CD4-positive, alpha-beta T cell (primary cell): ENCODE measurements at regions of chr3 and their contacts with region 1.

Region 1: DNA sequence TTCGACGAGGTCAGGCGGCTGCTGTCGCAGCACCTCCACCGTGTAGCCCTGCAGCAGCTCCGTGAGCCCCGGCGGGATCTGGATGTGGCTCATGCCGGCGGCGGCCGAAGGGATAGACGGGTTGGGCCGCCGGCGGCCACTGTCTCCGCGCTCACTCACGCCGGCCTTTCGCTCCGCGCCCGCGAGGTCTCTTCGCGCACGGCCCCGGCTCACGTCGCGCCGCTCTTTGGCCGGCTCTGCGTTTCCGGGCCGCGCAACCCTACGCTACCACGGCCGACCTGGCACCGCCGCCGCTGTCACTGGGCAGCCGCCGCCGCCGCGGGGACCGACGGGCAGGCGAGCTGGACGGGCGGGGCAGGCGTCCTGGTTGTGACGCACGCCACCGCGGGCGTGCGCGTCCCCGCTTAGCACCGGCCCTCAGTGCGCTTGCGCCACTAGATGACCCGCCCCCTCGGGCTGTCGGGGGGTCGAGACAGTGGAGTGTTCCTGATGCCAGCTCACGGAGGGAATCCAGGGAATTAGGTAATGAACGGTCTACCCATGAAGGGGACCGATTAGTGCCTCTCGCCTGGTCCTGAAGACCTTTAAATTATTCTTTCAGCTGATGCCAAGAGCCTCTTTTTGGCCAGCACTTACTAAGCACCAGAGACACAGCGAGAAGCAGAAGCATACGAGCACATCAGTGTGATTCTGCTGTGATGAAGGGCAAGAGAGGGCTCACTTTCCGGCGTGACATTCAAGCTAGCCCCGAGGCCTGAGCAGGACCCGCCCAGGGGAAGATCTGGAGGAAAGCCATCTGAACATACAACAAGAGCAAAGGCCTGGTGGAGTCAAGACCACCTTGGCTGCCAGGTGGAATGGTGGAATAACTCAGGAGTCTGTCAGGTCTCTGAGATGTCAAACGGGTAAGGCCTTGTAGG is at the start of gene PRKAR2A:
- DNase-seq: peak; percentile 56 to 92 (median 77)
- ATAC-seq: peak; percentile 61
- H3K4me3 ChIP-seq: peak within 1 kb of the TSS; percentile 75
- H3K4me3 Mint-ChIP-seq: peak within 1 kb of the TSS; percentile 96
- H3K27ac ChIP-seq: peak within 1 kb of the TSS; percentile 57 to 66
- H3K27ac Mint-ChIP-seq: peak within 1 kb of the TSS; percentile 97
- H3K4me1 ChIP-seq: peaks cover 31% of the 10 kb centered on the region
- H3K4me1 Mint-ChIP-seq: peaks cover 34% of the 10 kb centered on the region
- H3K27me3 ChIP-seq: no peaks in the 10 kb centered on the region
- H3K27me3 Mint-ChIP-seq: no peaks in the 10 kb centered on the region
- CTCF ChIP-seq: no peak
- total RNA-seq, gene PRKAR2A: 47.4 to 48.3 TPM

Region 2: GRCh38 chr3:47096959-47097358 is 1750.8 kb before region 1 on chr3:
- CTCF ChIA-PET with region 1: no interaction called
- POLR2A ChIA-PET with region 1: no interaction called
- intact Hi-C with region 1: no loop called
- DNase-seq: no peak
- ATAC-seq: no peak
- H3K4me3 ChIP-seq: no peak overlapping the region
- H3K4me3 Mint-ChIP-seq: no peak overlapping the region
- H3K27ac ChIP-seq: no peak overlapping the region
- H3K27ac Mint-ChIP-seq: no peak overlapping the region
- H3K4me1 ChIP-seq: no peaks in the 10 kb centered on the region
- H3K4me1 Mint-ChIP-seq: no peaks in the 10 kb centered on the region
- H3K27me3 ChIP-seq: no peaks in the 10 kb centered on the region
- H3K27me3 Mint-ChIP-seq: no peaks in the 10 kb centered on the region
- CTCF ChIP-seq: no peak

Region 3: GRCh38 chr3:48765376-48765775 is 82.4 kb before region 1 on chr3:
- CTCF ChIA-PET with region 1: no interaction called
- POLR2A ChIA-PET with region 1: no interaction called
- intact Hi-C with region 1: loop called in 1 of 2 experiments (anchors 2 kb)
- DNase-seq: peak in 3 of 14 experiments; percentile 4 to 38 (median 19)
- ATAC-seq: peak; percentile 49
- H3K4me3 ChIP-seq: no peak overlapping the region
- H3K4me3 Mint-ChIP-seq: no peak overlapping the region
- H3K27ac ChIP-seq: no peak overlapping the region
- H3K27ac Mint-ChIP-seq: no peak overlapping the region
- H3K4me1 ChIP-seq: no peaks in the 10 kb centered on the region
- H3K4me1 Mint-ChIP-seq: no peaks in the 10 kb centered on the region
- H3K27me3 ChIP-seq: no peaks in the 10 kb centered on the region
- H3K27me3 Mint-ChIP-seq: no peaks in the 10 kb centered on the region
- CTCF ChIP-seq: no peak

Region 4: GRCh38 chr3:48789665-48790064 is 58.1 kb before region 1 on chr3:
- CTCF ChIA-PET with region 1: no interaction called
- POLR2A ChIA-PET with region 1: no interaction called
- intact Hi-C with region 1: loop called (anchors 5 to 10 kb)
- DNase-seq: no peak
- ATAC-seq: no peak
- H3K4me3 ChIP-seq: no peak overlapping the region
- H3K4me3 Mint-ChIP-seq: no peak overlapping the region
- H3K27ac ChIP-seq: no peak overlapping the region
- H3K27ac Mint-ChIP-seq: peak overlapping the region; percentile 61
- H3K4me1 ChIP-seq: peaks cover 13% of the 10 kb centered on the region
- H3K4me1 Mint-ChIP-seq: peaks cover 21% of the 10 kb centered on the region
- H3K27me3 ChIP-seq: no peaks in the 10 kb centered on the region
- H3K27me3 Mint-ChIP-seq: no peaks in the 10 kb centered on the region
- CTCF ChIP-seq: no peak

Region 5: DNA sequence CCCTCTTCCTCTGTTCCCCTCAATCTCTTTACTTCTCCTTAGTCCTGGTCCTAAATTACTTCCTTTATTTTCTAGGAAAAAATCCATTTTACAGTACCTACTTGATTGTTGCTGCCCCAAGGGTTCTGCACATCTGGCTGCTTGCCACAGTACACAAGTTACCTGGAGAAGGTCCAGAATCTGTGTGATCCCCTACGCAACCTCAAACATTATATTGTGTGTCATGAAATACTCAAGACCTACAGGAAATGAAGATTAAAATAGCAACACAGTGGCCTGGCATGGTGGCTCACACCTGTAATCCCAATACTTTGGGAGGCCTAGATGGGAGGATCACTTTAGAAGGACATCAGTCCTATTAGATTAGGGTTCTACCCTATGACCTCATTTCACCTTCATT is 48.8 kb before region 1 on chr3:
- CTCF ChIA-PET with region 1: no interaction called
- POLR2A ChIA-PET with region 1: no interaction called
- intact Hi-C with region 1: loop called (anchors 5 to 10 kb)
- DNase-seq: no peak
- ATAC-seq: no peak
- H3K4me3 ChIP-seq: no peak overlapping the region
- H3K4me3 Mint-ChIP-seq: no peak overlapping the region
- H3K27ac ChIP-seq: no peak overlapping the region
- H3K27ac Mint-ChIP-seq: no peak overlapping the region
- H3K4me1 ChIP-seq: no peaks in the 10 kb centered on the region
- H3K4me1 Mint-ChIP-seq: no peaks in the 10 kb centered on the region
- H3K27me3 ChIP-seq: no peaks in the 10 kb centered on the region
- H3K27me3 Mint-ChIP-seq: no peaks in the 10 kb centered on the region
- CTCF ChIP-seq: no peak

Region 6: GRCh38 chr3:48811524-48811923 is 36.2 kb before region 1 on chr3:
- CTCF ChIA-PET with region 1: no interaction called
- POLR2A ChIA-PET with region 1: interaction called, 25 read pairs
- intact Hi-C with region 1: loop called (anchors 5 kb)
- DNase-seq: no peak
- ATAC-seq: no peak
- H3K4me3 ChIP-seq: no peak overlapping the region
- H3K4me3 Mint-ChIP-seq: peak overlapping the region; percentile 9
- H3K27ac ChIP-seq: no peak overlapping the region
- H3K27ac Mint-ChIP-seq: peak overlapping the region; percentile 65
- H3K4me1 ChIP-seq: peaks cover 32% of the 10 kb centered on the region
- H3K4me1 Mint-ChIP-seq: peaks cover 40% of the 10 kb centered on the region
- H3K27me3 ChIP-seq: no peaks in the 10 kb centered on the region
- H3K27me3 Mint-ChIP-seq: no peaks in the 10 kb centered on the region
- CTCF ChIP-seq: no peak

Region 7: DNA sequence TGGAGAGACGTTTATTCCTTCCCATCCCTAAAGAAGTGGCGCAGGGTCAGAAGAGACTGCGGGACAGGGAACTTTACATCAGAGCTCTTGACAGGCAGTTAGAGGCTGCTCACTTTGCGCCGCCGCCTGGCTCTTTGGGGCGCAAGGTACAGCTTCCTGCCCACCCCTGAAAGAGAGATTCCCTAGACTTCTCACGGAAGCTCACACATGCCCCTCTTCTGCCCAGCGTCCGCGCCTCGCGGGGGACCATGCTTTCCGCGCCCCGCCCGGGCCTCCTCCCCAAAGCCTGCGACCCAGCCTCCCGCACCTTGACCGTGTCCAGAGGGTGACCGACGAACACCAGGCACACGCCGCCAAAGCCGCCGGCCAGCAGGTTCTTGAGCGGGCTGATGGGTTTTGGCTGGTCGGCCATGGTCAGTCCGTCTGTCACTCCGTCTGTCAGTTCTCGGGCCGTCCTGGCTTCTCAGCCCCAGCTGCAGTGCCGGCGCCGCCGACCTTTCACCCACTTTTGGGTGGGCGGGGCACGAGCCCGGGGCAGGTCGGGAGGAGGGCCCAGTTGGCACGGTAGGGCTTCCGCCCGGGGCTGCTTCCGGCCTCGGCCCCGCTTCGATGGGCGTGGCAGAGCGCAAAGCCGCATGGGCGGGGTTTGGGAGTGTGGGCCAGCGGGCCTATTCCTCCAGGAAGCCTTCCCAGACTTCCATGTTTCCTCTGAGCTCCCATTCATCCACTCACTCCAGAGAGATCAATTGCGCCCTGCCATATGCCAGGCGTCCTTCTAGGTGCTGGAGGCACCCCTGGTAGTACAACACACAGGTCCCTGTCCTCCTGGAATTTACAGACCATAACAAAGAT is 50.8 kb after region 1 on chr3 and contains the start of gene SLC25A20:
- CTCF ChIA-PET with region 1: no interaction called
- POLR2A ChIA-PET with region 1: interaction called, 17 read pairs
- intact Hi-C with region 1: loop called (anchors 5 kb)
- DNase-seq: peak; percentile 75 to 93 (median 88)
- ATAC-seq: peak; percentile 97
- H3K4me3 ChIP-seq: peak within 1 kb of the TSS; percentile 92
- H3K4me3 Mint-ChIP-seq: peak within 1 kb of the TSS; percentile 95
- H3K27ac ChIP-seq: peak within 1 kb of the TSS; percentile 71 to 84
- H3K27ac Mint-ChIP-seq: peak within 1 kb of the TSS; percentile 78
- H3K4me1 ChIP-seq: peaks cover 47% of the 10 kb centered on the region
- H3K4me1 Mint-ChIP-seq: peaks cover 40% of the 10 kb centered on the region
- H3K27me3 ChIP-seq: no peaks in the 10 kb centered on the region
- H3K27me3 Mint-ChIP-seq: no peaks in the 10 kb centered on the region
- CTCF ChIP-seq: no peak
- total RNA-seq, gene SLC25A20: 0.41 to 0.78 TPM